HCT116 (cell line): ENCODE measurements at regions of chr7 and their contacts with region 1.

Region 1: GRCh38 chr7:136114966-136115762 is 138.0 kb upstream of the MTPN start:
- DNase-seq: peak; percentile 13
- ATAC-seq: peak; percentile 97
- H3K4me3 ChIP-seq: no peak overlapping the region
- H3K27ac ChIP-seq: no peak overlapping the region
- H3K4me1 ChIP-seq: no peaks in the 10 kb centered on the region
- H3K27me3 ChIP-seq: no peaks in the 10 kb centered on the region
- CTCF ChIP-seq: peak in 2 of 3 experiments; percentile 68 to 82; a peak in 4 of 6 replicates
- POLR2A ChIP-seq: no peak
- RAD21 ChIP-seq: peak; percentile 46

Region 2: DNA sequence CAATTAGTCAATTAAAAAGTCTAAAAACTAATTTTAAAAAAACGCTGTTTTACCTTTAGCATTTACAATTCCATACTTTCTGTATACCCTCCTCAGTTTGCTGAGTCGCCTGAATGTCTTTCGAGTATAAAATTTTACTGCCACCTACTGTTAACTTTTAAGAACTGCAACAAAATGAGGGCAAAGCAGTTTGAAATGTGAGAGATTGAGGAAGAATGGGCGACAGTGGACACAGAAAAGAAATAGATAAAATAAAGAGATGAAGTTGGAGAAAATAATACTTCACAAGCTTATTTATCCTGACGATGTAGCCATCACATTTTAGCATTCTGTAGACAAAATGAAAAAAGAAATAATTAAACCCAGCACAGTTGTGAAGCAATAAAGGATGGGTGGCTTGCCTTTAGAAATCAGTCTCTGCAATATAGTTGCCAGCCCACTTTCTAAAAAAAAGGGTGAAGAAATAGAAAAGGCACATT is 1339.1 kb after region 1 on chr7:
- CTCF ChIA-PET with region 1: no interaction called
- POLR2A ChIA-PET with region 1: no interaction called
- RAD21 ChIA-PET with region 1: no interaction called
- intact Hi-C with region 1: loop called (anchors 5 kb)
- DNase-seq: no peak
- ATAC-seq: 0 out of 2 replicates have a peak, but pooled peaks have one; percentile 46
- H3K4me3 ChIP-seq: no peak overlapping the region
- H3K27ac ChIP-seq: no peak overlapping the region
- H3K4me1 ChIP-seq: no peaks in the 10 kb centered on the region
- H3K27me3 ChIP-seq: no peaks in the 10 kb centered on the region
- CTCF ChIP-seq: peak; percentile 23 to 70 (median 53); a peak in 5 of 6 replicates
- POLR2A ChIP-seq: no peak
- RAD21 ChIP-seq: peak; percentile 58

Region 3: GRCh38 chr7:137592232-137592896 is 1477.2 kb after region 1 on chr7:
- CTCF ChIA-PET with region 1: no interaction called
- POLR2A ChIA-PET with region 1: no interaction called
- RAD21 ChIA-PET with region 1: no interaction called
- intact Hi-C with region 1: loop called (anchors 2 kb)
- DNase-seq: peak; percentile 22
- ATAC-seq: peak; percentile 92
- H3K4me3 ChIP-seq: no peak overlapping the region
- H3K27ac ChIP-seq: no peak overlapping the region
- H3K4me1 ChIP-seq: peaks cover 0 to 6% of the 10 kb centered on the region in 2 experiments; a peak in 1 of 4 replicates
- H3K27me3 ChIP-seq: 0 out of 2 replicates have a peak, but pooled peaks cover 6% of the 10 kb centered on the region
- CTCF ChIP-seq: peak; percentile 62 to 80 (median 65); a peak in 5 of 6 replicates
- POLR2A ChIP-seq: no peak
- RAD21 ChIP-seq: peak; percentile 86